ENCODE measurements at regions of chr19 and their contacts with region 1.

Region 1: GRCh38 chr19:41144403-41144802 is 30.2 kb downstream of the CYP2F1 start:
- DNase-seq: peak; percentile 80
- ATAC-seq: peak; percentile 81

Region 2: GRCh38 chr19:40662921-40663694 is 481.3 kb before region 1 on chr19:
- intact Hi-C with region 1: loop called (anchors 10 kb)
- DNase-seq: peak; percentile 96
- ATAC-seq: peak; percentile 89